ENCODE measurements at regions of chr2 and their contacts with region 1.

Region 1: GRCh38 chr2:95022309-95023221 is 2.9 kb upstream of the MAL start:
- DNase-seq: peak; percentile 80 to 83
- H3K4me3 ChIP-seq: no peak overlapping the region
- H3K27ac ChIP-seq: peak overlapping the region; percentile 89 to 98 (median 92)
- H3K4me1 ChIP-seq: peaks cover 28 to 58% of the 10 kb centered on the region in 2 donors
- H3K27me3 ChIP-seq: no peaks in the 10 kb centered on the region
- CTCF ChIP-seq: peak; percentile 77 to 97 (median 94)
- POLR2A ChIP-seq: no peak

Region 2: GRCh38 chr2:94939349-94939748 is 83.2 kb before region 1 on chr2:
- intact Hi-C with region 1: no loop called
- DNase-seq: no peak
- H3K4me3 ChIP-seq: no peak overlapping the region
- H3K27ac ChIP-seq: no peak overlapping the region
- H3K4me1 ChIP-seq: no peaks in the 10 kb centered on the region
- H3K27me3 ChIP-seq: no peaks in the 10 kb centered on the region
- CTCF ChIP-seq: no peak
- POLR2A ChIP-seq: no peak

Region 3: DNA sequence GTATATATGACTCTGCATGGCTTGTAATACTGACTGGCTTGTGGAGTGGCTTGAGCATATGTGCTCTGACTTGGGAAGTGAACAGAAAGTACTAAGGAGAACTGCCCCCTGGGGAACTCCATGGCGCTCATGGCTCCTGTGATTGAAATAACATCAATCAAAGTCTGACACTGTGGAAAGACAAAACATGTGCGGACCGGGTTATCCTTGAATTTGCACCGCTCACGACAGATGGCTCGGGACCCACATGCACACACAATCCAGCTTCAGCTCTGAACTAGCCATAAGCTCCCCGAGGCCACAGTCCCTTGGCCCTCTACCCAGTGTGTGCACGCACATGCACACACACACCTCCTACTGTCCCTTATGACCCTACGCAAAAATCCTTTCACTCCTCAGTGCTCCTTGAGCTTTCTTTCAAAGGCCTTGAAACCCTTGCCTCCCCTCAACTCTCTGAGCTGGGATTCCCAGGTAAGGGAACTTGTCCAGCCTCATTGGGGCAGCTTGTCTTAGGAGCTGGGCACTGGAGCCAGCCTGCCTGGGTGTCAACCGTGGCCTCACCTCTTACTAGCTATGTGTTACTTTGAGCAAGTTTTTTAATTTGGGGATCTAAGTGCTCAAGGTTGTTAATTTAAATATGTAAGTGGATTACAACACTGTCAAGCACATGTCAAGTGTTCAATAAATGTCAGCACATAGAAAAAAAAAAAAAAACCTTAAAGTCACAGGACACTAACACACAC is 55.5 kb after region 1 on chr2:
- intact Hi-C with region 1: loop called (anchors 2 kb)
- DNase-seq: no peak
- H3K4me3 ChIP-seq: no peak overlapping the region
- H3K27ac ChIP-seq: peak overlapping the region in 1 of 3 donors; percentile 1
- H3K4me1 ChIP-seq: peaks cover 5% of the 10 kb centered on the region in 2 donors
- H3K27me3 ChIP-seq: no peaks in the 10 kb centered on the region
- CTCF ChIP-seq: no peak
- POLR2A ChIP-seq: no peak

Measured in thyroid gland (tissue), 4 donors.